Activated CD8-positive, alpha-beta memory T cell treated with anti-CD3 and anti-CD28 coated beads, Interleukin-2, amount 10 ng/mL, durations not matched to agents 7 days and 5 days (primary cell): ENCODE measurements at regions of chr12 and their contacts with region 1.

Region 1: DNA sequence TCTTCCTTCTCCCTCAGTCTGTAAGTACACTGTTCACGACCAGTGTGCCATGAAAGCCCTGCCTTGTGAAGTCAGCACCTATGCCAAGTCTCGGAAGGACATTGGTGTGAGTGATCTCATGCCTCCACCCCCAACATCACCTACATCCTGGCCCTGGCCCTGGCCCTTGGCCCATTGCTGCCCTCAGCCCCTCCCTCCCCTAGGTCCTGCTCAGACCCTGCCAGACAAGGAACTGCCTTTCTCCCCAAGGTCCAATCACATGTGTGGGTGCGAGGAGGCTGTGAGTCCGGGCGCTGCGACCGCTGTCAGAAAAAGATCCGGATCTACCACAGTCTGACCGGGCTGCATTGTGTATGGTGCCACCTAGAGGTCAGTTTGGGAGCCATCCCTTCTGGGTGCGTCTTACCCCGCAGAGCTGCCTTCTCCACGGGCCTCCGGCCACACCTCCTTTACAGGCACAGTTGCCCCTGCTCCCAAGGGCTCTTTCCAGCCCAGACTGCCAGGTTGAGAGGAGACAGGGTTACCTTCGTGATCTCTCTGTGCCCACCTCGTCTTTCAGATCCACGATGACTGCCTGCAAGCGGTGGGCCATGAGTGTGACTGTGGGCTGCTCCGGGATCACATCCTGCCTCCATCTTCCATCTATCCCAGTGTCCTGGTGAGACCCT is 9.2 kb downstream of the DGKA start:
- DNase-seq: peak; percentile 91
- ATAC-seq: peak; percentile 95
- H3K4me3 Mint-ChIP-seq: no peak overlapping the region
- H3K27ac Mint-ChIP-seq: peak overlapping the region; percentile 58
- H3K4me1 Mint-ChIP-seq: peaks cover 63% of the 10 kb centered on the region
- H3K27me3 Mint-ChIP-seq: no peaks in the 10 kb centered on the region

Region 2: DNA sequence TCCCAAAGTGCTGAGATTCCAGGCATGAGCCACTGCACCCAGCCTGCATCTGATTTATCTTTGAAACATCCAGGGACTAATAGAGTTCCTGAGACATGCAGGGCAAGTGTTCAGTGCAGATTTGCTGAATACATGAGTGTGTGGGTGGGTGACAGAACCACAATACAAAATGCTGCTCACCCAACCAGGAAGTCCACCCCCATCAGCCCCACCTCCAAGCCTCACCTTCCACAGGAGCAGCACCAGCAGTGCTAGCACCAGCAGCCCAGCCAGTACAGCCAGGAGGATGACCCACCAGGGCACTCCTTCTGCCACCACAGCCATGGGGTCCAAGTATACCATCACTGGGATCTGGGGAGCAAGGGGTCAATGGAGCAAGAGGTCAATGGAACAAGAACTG is 252.5 kb before region 1 on chr12:
- CTCF ChIA-PET with region 1: no interaction called
- DNase-seq: no peak
- ATAC-seq: no peak
- H3K4me3 Mint-ChIP-seq: no peak overlapping the region
- H3K27ac Mint-ChIP-seq: no peak overlapping the region
- H3K4me1 Mint-ChIP-seq: peaks cover 8% of the 10 kb centered on the region
- H3K27me3 Mint-ChIP-seq: peaks cover 10% of the 10 kb centered on the region

Region 3: GRCh38 chr12:55817346-55818139 is 122.7 kb before region 1 on chr12 and contains the starts of genes ORMDL2 and SARNP:
- CTCF ChIA-PET with region 1: interaction called, 17 read pairs
- DNase-seq: peak; percentile 100
- ATAC-seq: peak; percentile 96
- H3K4me3 Mint-ChIP-seq: no peak within 1 kb of the TSS
- H3K27ac Mint-ChIP-seq: no peak within 1 kb of the TSS
- H3K4me1 Mint-ChIP-seq: peaks cover 41% of the 10 kb centered on the region
- H3K27me3 Mint-ChIP-seq: no peaks in the 10 kb centered on the region
- total RNA-seq, gene ORMDL2: 45.8 to 57.2 TPM
- total RNA-seq, gene SARNP: 96.8 to 98.6 TPM

Region 4: GRCh38 chr12:55829967-55830600 is 110.1 kb before region 1 on chr12:
- CTCF ChIA-PET with region 1: interaction called, 15 read pairs
- DNase-seq: peak; percentile 67
- ATAC-seq: peak; percentile 24
- H3K4me3 Mint-ChIP-seq: peak overlapping the region; percentile 97
- H3K27ac Mint-ChIP-seq: peak overlapping the region; percentile 93
- H3K4me1 Mint-ChIP-seq: peaks cover 44% of the 10 kb centered on the region
- H3K27me3 Mint-ChIP-seq: no peaks in the 10 kb centered on the region

Region 5: GRCh38 chr12:55926738-55927587 is 13.2 kb before region 1 on chr12:
- CTCF ChIA-PET with region 1: interaction called, 121 read pairs
- DNase-seq: peak; percentile 97
- ATAC-seq: peak; percentile 48
- H3K4me3 Mint-ChIP-seq: peak overlapping the region; percentile 96
- H3K27ac Mint-ChIP-seq: peak overlapping the region; percentile 98
- H3K4me1 Mint-ChIP-seq: peaks cover 44% of the 10 kb centered on the region
- H3K27me3 Mint-ChIP-seq: no peaks in the 10 kb centered on the region

Region 6: DNA sequence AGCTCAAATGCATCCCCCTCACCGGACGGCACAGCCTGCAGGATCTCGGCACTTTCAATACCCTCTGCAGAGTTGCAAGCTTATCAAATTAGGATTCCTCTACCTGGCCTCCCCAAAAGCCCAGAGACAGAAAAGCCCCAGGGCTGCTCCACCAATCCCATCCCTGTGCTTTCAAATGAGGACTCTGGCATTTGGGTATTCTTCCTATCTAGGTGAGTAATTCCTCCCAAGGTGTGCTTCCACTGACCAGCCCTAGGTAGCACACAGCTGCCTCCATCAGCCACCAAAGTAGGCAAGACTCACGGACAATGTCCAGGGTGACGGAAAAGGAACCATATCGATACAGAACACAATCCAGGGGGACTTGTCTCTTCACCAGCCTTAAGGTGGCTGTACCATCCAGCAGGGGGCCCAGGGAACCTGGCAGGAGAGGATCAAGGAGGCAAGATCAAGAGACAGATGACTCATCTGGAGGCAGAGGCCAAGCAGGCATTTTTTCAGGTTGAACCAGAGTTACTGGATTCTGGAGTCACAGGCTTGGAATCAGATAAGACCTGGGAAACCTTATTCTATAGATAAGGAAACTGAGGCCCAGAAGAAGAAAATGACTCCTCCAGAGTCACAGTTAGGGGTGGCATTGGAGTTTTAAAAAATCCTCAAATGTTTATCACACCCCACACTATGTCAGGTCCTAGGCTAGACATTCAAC is 15.8 kb after region 1 on chr12:
- CTCF ChIA-PET with region 1: interaction called, 12 read pairs
- DNase-seq: no peak
- ATAC-seq: peak; percentile 69
- H3K4me3 Mint-ChIP-seq: no peak overlapping the region
- H3K27ac Mint-ChIP-seq: peak overlapping the region; percentile 22
- H3K4me1 Mint-ChIP-seq: no peaks in the 10 kb centered on the region
- H3K27me3 Mint-ChIP-seq: no peaks in the 10 kb centered on the region

Region 7: DNA sequence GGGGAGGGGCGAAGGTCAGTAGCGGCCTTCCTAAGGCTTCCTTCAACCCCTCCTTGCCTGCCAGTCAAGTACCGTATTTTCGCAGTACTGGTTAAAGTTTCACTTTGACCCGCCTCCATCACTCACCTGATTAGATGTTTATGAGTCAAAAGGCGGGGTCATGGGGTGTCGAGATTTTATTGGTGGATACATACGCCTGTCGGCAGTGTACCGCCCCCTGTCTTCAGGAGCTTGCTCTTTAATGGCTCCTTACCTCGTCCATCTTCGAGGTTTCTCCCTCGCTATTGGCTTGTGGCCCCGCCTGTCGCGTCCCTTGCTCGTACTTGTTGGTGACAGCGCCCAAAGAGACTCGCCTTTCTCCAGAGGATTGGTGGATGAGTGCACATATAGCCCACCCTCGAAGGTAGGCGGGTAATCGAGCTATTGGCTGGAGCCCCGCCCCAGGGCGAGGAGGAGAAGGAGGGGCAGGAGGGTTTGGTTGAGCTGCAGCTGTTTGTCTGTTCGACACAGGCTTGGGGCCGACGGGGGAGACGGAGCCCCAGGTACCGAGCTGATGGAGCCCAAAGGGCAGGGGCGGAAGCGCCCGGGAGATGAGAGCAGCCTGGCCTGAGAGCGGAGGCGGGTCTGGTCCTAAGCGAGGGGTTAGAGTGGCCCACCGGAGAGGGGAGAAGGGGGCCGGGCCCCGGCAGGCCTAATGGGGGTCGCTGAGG is 33.6 kb after region 1 on chr12 and contains the start of gene RAB5B:
- CTCF ChIA-PET with region 1: interaction called, 16 read pairs
- DNase-seq: peak; percentile 100
- ATAC-seq: peak; percentile 93
- H3K4me3 Mint-ChIP-seq: no peak within 1 kb of the TSS
- H3K27ac Mint-ChIP-seq: no peak within 1 kb of the TSS
- H3K4me1 Mint-ChIP-seq: peaks cover 29% of the 10 kb centered on the region
- H3K27me3 Mint-ChIP-seq: no peaks in the 10 kb centered on the region
- total RNA-seq, gene RAB5B: 46.4 to 55.6 TPM